Heart left ventricle (tissue), 16 donors: ENCODE measurements at regions of chr3 and their contacts with region 1.

Region 1: DNA sequence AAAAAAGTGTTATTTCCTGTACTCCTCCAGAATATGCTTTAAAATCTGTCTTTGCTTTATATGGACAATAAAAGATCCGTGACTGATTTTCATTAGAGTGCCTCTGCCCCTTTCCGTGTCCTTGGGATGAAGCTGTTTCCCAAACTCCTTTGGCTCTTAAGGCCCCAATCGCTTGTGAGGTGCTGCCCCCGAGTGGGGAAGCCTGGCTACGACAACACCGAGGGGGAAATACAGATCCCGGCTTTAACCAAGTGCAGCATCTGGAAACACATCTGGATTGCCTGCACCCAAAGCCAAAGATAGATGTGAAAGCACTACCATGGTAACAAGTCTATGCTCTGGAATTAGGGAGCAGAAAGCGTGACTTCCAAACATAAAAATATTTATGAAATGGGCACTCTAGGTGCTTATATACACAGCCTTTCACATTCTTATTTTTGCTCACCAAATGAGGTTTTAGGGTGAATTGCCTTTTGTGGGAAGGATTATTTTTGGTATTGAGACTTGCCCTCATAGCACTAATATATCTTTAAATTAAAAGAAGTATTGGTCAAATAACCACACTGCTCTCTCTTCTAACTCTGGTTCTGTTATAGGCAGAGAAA is 40.6 kb upstream of the ADCY5 start:
- DNase-seq: peak; percentile 64 to 82 (median 73)
- ATAC-seq: peak; percentile 64 to 85 (median 78)
- H3K4me3 ChIP-seq: peak overlapping the region in 1 of 12 donors; percentile 4
- H3K27ac ChIP-seq: peak overlapping the region in 10 of 12 donors; percentile 34 to 83 (median 67)
- H3K4me1 ChIP-seq: peaks cover 0 to 39% (median 9%) of the 10 kb centered on the region in 12 donors
- H3K27me3 ChIP-seq: no peaks in the 10 kb centered on the region
- CTCF ChIP-seq: peak; percentile 70 to 92 (median 86)
- POLR2A ChIP-seq: no peak

Region 2: GRCh38 chr3:123096731-123097130 is 392.8 kb before region 1 on chr3:
- intact Hi-C with region 1: no loop called
- DNase-seq: peak; percentile 70 to 88 (median 80)
- ATAC-seq: peak; percentile 82 to 94 (median 88)
- H3K4me3 ChIP-seq: no peak overlapping the region
- H3K27ac ChIP-seq: peak overlapping the region in 7 of 12 donors; percentile 27 to 76 (median 44)
- H3K4me1 ChIP-seq: peaks cover 0 to 40% (median 29%) of the 10 kb centered on the region in 12 donors
- H3K27me3 ChIP-seq: no peaks in the 10 kb centered on the region
- CTCF ChIP-seq: no peak
- POLR2A ChIP-seq: no peak

Region 3: DNA sequence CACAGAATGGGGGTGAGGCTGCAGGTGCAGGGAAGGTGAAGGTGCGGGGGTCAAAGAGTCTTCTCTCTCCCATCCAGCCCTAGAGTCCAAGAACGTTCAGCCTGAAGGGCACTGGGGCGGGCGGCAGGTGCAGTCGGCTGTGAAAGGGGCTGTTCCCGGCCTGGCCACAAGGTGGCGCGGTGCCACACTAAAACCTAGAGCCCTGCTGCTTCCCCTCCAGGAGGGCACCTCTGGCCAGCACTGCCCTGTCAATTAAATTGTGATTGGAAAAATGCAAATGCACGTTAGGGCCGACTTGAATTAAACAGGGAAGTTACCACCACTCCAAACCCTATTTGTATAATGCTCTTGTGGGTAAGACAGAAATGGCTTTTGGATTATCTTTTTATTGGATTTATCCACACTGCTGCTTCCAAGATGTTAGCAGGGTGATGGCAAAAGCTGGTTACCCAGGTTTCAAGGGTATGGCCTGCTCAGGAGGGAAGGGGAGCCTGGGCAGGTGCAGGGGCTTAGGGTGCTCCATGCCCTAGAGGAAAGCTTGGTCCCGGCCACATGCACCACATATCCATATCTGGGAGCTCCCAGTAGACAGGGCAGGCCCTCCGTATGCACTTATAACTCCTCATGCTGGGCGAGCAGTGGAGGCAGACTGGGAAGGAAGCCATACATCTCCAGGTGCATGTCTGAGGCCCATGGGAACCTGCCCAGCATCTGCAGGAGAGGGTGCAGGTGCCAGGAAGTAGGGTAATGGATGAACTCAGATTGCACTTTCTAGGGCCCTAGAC is 160.5 kb before region 1 on chr3:
- intact Hi-C with region 1: loop called (anchors 1 to 2 kb)
- DNase-seq: peak; percentile 68 to 86 (median 82)
- ATAC-seq: peak; percentile 30 to 58 (median 52)
- H3K4me3 ChIP-seq: no peak overlapping the region
- H3K27ac ChIP-seq: peak overlapping the region in 11 of 12 donors; percentile 33 to 97 (median 89)
- H3K4me1 ChIP-seq: peaks cover 0 to 88% (median 32%) of the 10 kb centered on the region in 12 donors
- H3K27me3 ChIP-seq: no peaks in the 10 kb centered on the region
- CTCF ChIP-seq: peak; percentile 87 to 97 (median 96)
- POLR2A ChIP-seq: no peak

Region 4: DNA sequence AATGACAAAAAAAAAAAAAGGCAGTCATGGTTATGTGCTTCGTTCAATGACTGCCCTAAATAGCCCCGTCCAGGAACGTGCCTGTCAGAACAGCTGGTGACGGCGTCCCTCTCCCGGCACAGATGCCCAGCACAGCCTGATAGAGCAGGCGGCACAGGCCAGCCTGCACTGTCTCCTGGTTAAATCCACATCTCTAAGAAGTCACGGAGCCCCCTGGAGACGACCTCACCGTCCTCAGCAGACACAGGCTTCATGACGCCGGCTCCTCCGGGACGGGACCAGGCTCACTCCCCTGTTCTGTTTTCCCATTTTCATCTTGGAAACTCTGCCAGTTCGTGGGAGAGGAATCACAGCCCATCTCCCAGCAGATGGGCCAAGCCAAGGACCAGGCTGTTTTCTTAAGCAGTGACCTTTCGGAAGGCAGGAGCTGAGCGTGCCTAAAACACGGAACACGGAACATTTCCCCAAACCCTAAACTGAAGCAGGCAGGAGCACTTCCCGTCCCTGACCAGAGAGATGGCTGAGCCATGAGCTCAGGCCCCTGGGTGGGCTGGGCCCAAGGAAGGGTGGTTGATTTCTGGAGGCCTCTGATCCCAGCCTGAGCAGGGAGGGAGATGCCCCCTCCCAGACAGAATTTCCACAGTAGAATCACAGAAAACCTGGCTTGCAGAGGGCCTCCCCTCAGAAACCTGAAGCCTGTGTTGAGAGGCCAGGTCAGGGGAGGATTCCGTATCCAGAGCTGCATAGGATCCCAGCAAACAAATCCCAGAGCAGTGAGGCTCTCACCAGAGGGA is 76.5 kb before region 1 on chr3:
- intact Hi-C with region 1: loop called in 1 of 10 experiments (anchors 2 kb)
- DNase-seq: peak; percentile 71 to 83 (median 76)
- ATAC-seq: peak; percentile 79 to 89 (median 84)
- H3K4me3 ChIP-seq: peak overlapping the region in 6 of 12 donors; percentile 0 to 34 (median 22)
- H3K27ac ChIP-seq: peak overlapping the region; percentile 74 to 94 (median 89)
- H3K4me1 ChIP-seq: peaks cover 5 to 98% (median 62%) of the 10 kb centered on the region in 12 donors
- H3K27me3 ChIP-seq: no peaks in the 10 kb centered on the region
- CTCF ChIP-seq: peak in 1 of 12 donors; percentile 14
- POLR2A ChIP-seq: no peak

Region 5: GRCh38 chr3:123546133-123546755 is 56.7 kb after region 1 on chr3:
- intact Hi-C with region 1: loop called in 1 of 10 experiments (anchors 10 kb)
- DNase-seq: no peak
- ATAC-seq: no peak
- H3K4me3 ChIP-seq: no peak overlapping the region
- H3K27ac ChIP-seq: peak overlapping the region in 1 of 12 donors; percentile 11
- H3K4me1 ChIP-seq: peaks cover 0 to 7% (median 0%) of the 10 kb centered on the region in 12 donors
- H3K27me3 ChIP-seq: no peaks in the 10 kb centered on the region
- CTCF ChIP-seq: no peak
- POLR2A ChIP-seq: no peak

Region 6: GRCh38 chr3:123559040-123559861 is 69.7 kb after region 1 on chr3:
- intact Hi-C with region 1: loop called in 1 of 10 experiments (anchors 5 kb)
- DNase-seq: no peak
- ATAC-seq: peak in 2 of 4 donors; percentile 41
- H3K4me3 ChIP-seq: no peak overlapping the region
- H3K27ac ChIP-seq: no peak overlapping the region
- H3K4me1 ChIP-seq: peaks cover 0 to 5% (median 0%) of the 10 kb centered on the region in 12 donors
- H3K27me3 ChIP-seq: no peaks in the 10 kb centered on the region
- CTCF ChIP-seq: peak; percentile 78 to 95 (median 84)
- POLR2A ChIP-seq: no peak